SK-N-SH (cell line): ENCODE measurements at regions of chr5 and their contacts with region 1.

Region 1: GRCh38 chr5:141889282-141889871 is 11.2 kb upstream of the PCDH1 start:
- DNase-seq: peak; percentile 38
- H3K4me3 ChIP-seq: no peak overlapping the region
- H3K27ac ChIP-seq: no peak overlapping the region
- H3K4me1 ChIP-seq: no peaks in the 10 kb centered on the region
- H3K27me3 ChIP-seq: peaks cover 10% of the 10 kb centered on the region; the same call in 1 of the 2 replicates
- CTCF ChIP-seq: peak; percentile 48
- EP300 ChIP-seq: no peak
- RAD21 ChIP-seq: peak; percentile 69

Region 2: DNA sequence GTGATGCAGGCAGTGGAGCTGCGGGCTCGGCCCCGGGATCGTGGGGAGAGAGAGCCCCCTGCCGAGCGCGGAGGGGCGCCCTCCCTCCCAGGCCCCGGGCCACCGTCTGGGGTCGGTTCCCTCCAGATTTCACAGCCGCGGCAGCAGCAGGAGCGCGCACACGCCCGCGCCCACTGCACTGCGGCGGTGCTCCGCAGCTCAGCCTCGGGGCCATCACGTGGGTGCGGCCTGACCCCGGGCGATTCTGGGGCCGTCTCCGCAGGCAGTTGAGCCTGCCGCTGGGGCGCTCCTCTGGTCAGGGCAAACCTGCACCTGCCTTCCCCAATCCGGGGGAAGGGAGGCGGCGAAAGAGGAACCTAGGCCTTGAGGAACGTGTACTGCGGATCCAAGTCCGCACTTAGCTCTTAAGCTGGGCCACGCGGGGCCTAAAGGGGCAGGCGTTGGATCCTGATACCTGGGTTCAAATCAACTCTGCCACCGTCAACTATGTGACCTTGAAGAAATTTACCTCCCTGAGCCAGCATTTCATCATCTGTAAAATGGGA is 24.9 kb after region 1 on chr5:
- CTCF ChIA-PET with region 1: interaction called, 48 read pairs
- POLR2A ChIA-PET with region 1: no interaction called
- DNase-seq: peak; percentile 94
- H3K4me3 ChIP-seq: peak overlapping the region in 1 of 2 experiments; percentile 4; a peak in 1 of 4 replicates
- H3K27ac ChIP-seq: no peak overlapping the region
- H3K4me1 ChIP-seq: peaks cover 0 to 4% of the 10 kb centered on the region in 2 experiments; a peak in 1 of 4 replicates
- H3K27me3 ChIP-seq: no peaks in the 10 kb centered on the region; the same call in 1 of the 2 replicates
- CTCF ChIP-seq: no peak
- EP300 ChIP-seq: no peak
- RAD21 ChIP-seq: peak; percentile 75